ENCODE measurements at regions of chr15 and their contacts with region 1.

Region 1: GRCh38 chr15:65583701-65584100 is 27.2 kb downstream of the INTS14 start:
- DNase-seq: no peak
- ATAC-seq: no peak
- H3K4me3 ChIP-seq: no peak overlapping the region
- H3K27ac ChIP-seq: no peak overlapping the region
- H3K4me1 ChIP-seq: no peaks in the 10 kb centered on the region
- H3K27me3 ChIP-seq: no peaks in the 10 kb centered on the region
- CTCF ChIP-seq: no peak

Region 2: DNA sequence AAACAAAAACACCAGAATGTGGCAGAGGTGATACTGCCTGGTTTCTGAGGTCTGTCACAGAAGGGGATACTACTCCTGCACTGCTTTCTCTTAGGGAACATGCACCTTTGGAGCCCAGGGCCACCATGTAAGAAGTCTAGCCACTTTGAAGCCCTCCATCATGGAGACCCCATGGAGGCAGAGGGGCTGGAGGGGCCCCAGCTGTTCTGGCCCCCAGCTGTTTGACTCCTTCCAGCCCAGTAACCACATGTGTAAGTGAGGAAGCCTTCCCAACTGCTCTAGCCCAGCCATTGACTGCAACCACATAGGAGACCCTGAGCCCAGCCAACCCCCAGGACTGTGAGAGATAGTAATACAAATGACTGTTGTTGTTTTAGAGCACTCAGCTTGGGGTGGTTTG is 152.0 kb before region 1 on chr15:
- intact Hi-C with region 1: no loop called
- DNase-seq: no peak
- ATAC-seq: no peak
- H3K4me3 ChIP-seq: no peak overlapping the region
- H3K27ac ChIP-seq: no peak overlapping the region
- H3K4me1 ChIP-seq: no peaks in the 10 kb centered on the region
- H3K27me3 ChIP-seq: no peaks in the 10 kb centered on the region
- CTCF ChIP-seq: no peak

Region 3: GRCh38 chr15:65712415-65712814 is 128.7 kb after region 1 on chr15:
- intact Hi-C with region 1: loop called in 1 of 2 experiments (anchors 10 kb)
- DNase-seq: no peak
- ATAC-seq: no peak
- H3K4me3 ChIP-seq: no peak overlapping the region
- H3K27ac ChIP-seq: no peak overlapping the region
- H3K4me1 ChIP-seq: no peaks in the 10 kb centered on the region
- H3K27me3 ChIP-seq: no peaks in the 10 kb centered on the region
- CTCF ChIP-seq: no peak